ENCODE measurements at regions of chr1 and their contacts with region 1.

Region 1: DNA sequence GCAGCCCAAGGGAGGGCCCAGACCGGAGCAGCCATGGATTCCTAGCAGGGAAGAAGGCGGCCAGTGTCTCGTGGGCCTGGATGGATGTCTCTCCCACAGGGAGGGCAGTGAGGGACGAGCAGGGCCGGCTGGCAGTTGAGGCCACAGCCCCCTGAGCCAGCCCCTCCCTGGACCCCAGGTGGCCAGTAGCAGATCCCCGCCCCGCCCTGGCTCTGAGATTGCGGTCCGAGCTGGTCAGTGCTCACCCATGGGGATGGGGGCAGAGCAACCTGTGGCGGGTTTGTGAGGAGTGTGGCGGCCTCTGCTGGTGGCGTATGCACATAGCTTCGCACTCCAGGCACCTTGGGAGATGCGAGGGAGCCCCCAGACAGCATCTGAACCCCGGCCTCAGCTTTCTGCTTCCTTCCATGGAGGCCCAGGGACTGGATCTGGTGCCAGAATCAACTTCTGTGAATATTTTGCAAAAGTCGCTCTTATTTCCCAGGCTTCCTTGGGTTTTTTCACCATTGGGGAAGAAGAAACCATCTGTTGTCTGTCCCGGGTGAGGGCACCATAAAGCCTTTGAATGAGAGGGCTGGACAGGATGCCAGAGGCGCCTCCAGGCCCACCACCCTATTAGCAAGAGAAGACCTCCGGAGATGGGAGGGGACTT is 8.4 kb upstream of the KCNN3 start:
- DNase-seq: peak; percentile 74
- H3K4me3 Mint-ChIP-seq: no peak overlapping the region
- H3K27ac Mint-ChIP-seq: no peak overlapping the region
- H3K4me1 Mint-ChIP-seq: no peaks in the 10 kb centered on the region
- H3K27me3 Mint-ChIP-seq: peaks cover 3% of the 10 kb centered on the region

Region 2: DNA sequence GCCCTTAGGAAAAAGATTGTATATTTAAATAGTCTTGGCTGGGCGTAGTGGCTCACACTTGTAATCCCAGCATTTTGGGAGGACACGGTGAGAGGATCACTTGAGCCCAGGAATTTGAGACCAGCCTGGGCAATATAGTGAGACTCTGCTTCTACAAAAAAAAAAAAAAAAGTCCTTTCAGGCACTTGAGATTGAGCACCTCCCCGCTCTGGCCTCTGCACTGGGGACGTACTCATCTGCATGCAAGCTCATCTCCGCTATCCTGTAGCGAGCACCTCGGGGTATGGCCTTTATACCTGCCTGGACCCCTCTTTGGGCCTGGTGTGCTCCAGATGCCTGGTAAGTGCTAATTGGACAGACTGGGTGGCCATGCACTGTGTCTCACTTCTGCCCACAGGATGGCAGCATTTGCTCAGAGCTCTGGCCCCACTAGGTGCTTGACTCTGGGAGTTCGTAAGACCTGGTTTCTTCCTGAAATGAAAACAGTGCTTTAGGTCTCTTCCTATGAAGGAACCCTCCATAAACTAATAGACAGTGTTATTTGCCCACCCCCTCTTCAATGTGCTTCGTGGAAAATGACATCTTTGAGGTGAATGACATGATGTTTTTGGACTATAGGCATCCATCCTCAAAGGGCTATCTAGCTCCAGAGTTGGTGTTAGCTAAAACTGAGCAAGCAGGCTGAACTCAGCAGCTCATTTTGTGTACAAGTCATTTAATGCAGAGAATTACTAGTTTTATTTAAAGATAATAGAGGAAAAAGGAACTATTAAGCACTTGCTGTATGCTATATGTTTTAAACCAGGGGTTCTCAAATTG is 208.8 kb before region 1 on chr1:
- CTCF ChIA-PET with region 1: interaction called, 14 read pairs
- POLR2A ChIA-PET with region 1: interaction called, 4 read pairs
- DNase-seq: peak; percentile 79
- H3K4me3 Mint-ChIP-seq: no peak overlapping the region
- H3K27ac Mint-ChIP-seq: no peak overlapping the region
- H3K4me1 Mint-ChIP-seq: peaks cover 15% of the 10 kb centered on the region
- H3K27me3 Mint-ChIP-seq: peaks cover 4% of the 10 kb centered on the region

Measured in activated CD4-positive, alpha-beta T cell treated with anti-CD3 and anti-CD28 coated beads, Interleukin-2, amount 10 ng/mL, durations not matched to agents 7 days and 5 days (primary cell).